CD14-positive monocyte (primary cell): ENCODE measurements at regions of chr16 and their contacts with region 1.

Region 1: GRCh38 chr16:3023669-3024478 is at the starts of genes HCFC1R1 and THOC6:
- DNase-seq: peak; percentile 95 to 96 (median 96)
- H3K4me3 ChIP-seq: peak within 1 kb of the TSS; percentile 44 to 91 (median 58)
- H3K4me3 Mint-ChIP-seq: peak within 1 kb of the TSS; percentile 88 to 96
- H3K27ac ChIP-seq: peak within 1 kb of the TSS; percentile 34 to 96
- H3K27ac Mint-ChIP-seq: peak within 1 kb of the TSS; percentile 87 to 99 (median 95)
- H3K4me1 ChIP-seq: peaks cover 61 to 68% of the 10 kb centered on the region in 2 donors
- H3K4me1 Mint-ChIP-seq: peaks cover 54% of the 10 kb centered on the region
- H3K27me3 ChIP-seq: peaks cover 3 to 9% of the 10 kb centered on the region in 2 donors
- H3K27me3 Mint-ChIP-seq: peaks cover 15 to 20% (median 16%) of the 10 kb centered on the region in 3 donors
- CTCF ChIP-seq: no peak
- polyA plus RNA-seq, gene HCFC1R1: 16.7 to 27.1 (median 19.9) TPM
- polyA plus RNA-seq, gene THOC6: 42.4 to 59.2 (median 57.7) TPM

Region 2: GRCh38 chr16:2777231-2777902 is 246.5 kb before region 1 on chr16 and contains the start of gene ELOB:
- intact Hi-C with region 1: loop called in 1 of 2 experiments (anchors 5 kb)
- DNase-seq: peak; percentile 67 to 79 (median 76)
- H3K4me3 ChIP-seq: peak within 1 kb of the TSS; percentile 94 to 98 (median 97)
- H3K4me3 Mint-ChIP-seq: peak within 1 kb of the TSS; percentile 91 to 97
- H3K27ac ChIP-seq: peak within 1 kb of the TSS; percentile 92 to 99
- H3K27ac Mint-ChIP-seq: peak within 1 kb of the TSS; percentile 93 to 98 (median 96)
- H3K4me1 ChIP-seq: peaks cover 32 to 37% of the 10 kb centered on the region in 2 donors
- H3K4me1 Mint-ChIP-seq: peaks cover 41% of the 10 kb centered on the region
- H3K27me3 ChIP-seq: no peaks in the 10 kb centered on the region
- H3K27me3 Mint-ChIP-seq: peaks cover 0 to 11% (median 5%) of the 10 kb centered on the region in 3 donors
- CTCF ChIP-seq: no peak
- polyA plus RNA-seq, gene ELOB: 150 to 405 (median 363) TPM

Region 3: DNA sequence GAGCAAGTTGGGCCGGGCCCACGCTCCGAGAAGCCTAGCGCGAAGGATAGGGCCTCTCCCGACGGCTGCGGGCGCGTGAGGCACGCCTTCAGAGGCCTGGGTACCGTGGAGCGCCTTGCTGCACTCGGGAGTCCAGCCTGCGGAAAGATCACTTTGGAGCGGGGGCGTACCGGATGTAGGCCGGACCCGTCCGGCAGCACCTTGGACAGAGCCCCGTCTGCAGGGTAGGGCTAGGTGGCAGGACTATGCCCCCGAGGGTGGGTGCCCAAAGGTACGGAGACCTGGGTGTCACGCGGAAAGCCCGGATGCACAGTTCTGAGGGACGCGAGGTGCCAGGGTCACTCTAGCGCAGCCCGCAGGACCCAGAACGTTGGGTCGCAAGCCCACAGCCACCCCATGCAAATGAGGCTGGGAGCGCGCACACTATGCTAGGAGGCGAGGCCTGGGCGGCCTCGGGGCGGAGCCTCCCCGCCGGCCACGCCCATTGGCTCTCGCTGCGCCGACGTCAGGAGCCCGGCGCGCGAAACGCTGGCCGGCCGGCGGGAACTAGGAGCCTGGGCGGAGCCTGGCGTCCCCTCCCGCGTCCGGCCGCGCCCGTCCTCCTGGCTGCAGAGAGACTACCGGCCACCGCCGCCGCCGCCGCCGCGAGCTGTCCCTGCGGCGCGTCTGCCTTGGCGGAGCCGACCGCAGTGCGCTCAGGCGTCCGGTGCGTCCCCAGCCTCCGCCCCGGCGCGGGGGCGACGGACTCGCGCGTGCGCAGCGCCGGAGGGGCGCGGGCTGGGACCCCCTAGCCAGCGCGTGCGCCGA is 54.9 kb before region 1 on chr16 and contains the start of gene PAQR4:
- intact Hi-C with region 1: loop called in 1 of 2 experiments (anchors 5 kb)
- DNase-seq: peak; percentile 87 to 92 (median 87)
- H3K4me3 ChIP-seq: peak within 1 kb of the TSS; percentile 63 to 95 (median 63)
- H3K4me3 Mint-ChIP-seq: peak within 1 kb of the TSS; percentile 77 to 85
- H3K27ac ChIP-seq: peak within 1 kb of the TSS; percentile 20 to 53
- H3K27ac Mint-ChIP-seq: peak within 1 kb of the TSS in 5 of 7 donors; percentile 24 to 83 (median 70)
- H3K4me1 ChIP-seq: peaks cover 50 to 66% of the 10 kb centered on the region in 2 donors
- H3K4me1 Mint-ChIP-seq: peaks cover 41% of the 10 kb centered on the region
- H3K27me3 ChIP-seq: peaks cover 17 to 44% of the 10 kb centered on the region in 2 donors
- H3K27me3 Mint-ChIP-seq: peaks cover 30 to 48% (median 34%) of the 10 kb centered on the region in 3 donors
- CTCF ChIP-seq: no peak
- polyA plus RNA-seq, gene PAQR4: 6.3 to 14.2 (median 8.9) TPM

Region 4: GRCh38 chr16:3003582-3004302 is 20.1 kb before region 1 on chr16:
- intact Hi-C with region 1: loop called (anchors 2 kb)
- DNase-seq: peak; percentile 98 to 99 (median 98)
- H3K4me3 ChIP-seq: no peak overlapping the region
- H3K4me3 Mint-ChIP-seq: peak overlapping the region; percentile 42 to 64
- H3K27ac ChIP-seq: no peak overlapping the region
- H3K27ac Mint-ChIP-seq: no peak overlapping the region
- H3K4me1 ChIP-seq: peaks cover 40 to 41% of the 10 kb centered on the region in 2 donors
- H3K4me1 Mint-ChIP-seq: peaks cover 38% of the 10 kb centered on the region
- H3K27me3 ChIP-seq: peaks cover 0 to 2% of the 10 kb centered on the region in 2 donors
- H3K27me3 Mint-ChIP-seq: peaks cover 0 to 21% (median 17%) of the 10 kb centered on the region in 3 donors
- CTCF ChIP-seq: peak; percentile 34

Region 5: GRCh38 chr16:3065069-3065741 is 41.3 kb after region 1 on chr16 and contains the start of gene IL32:
- intact Hi-C with region 1: no loop called
- DNase-seq: peak in 1 of 3 donors; percentile 55
- H3K4me3 ChIP-seq: no peak within 1 kb of the TSS
- H3K4me3 Mint-ChIP-seq: peak within 1 kb of the TSS in 1 of 2 donors; percentile 66
- H3K27ac ChIP-seq: no peak within 1 kb of the TSS
- H3K27ac Mint-ChIP-seq: peak within 1 kb of the TSS in 2 of 7 donors; percentile 32 to 33
- H3K4me1 ChIP-seq: peaks cover 22 to 26% of the 10 kb centered on the region in 2 donors
- H3K4me1 Mint-ChIP-seq: peaks cover 27% of the 10 kb centered on the region
- H3K27me3 ChIP-seq: no peaks in the 10 kb centered on the region
- H3K27me3 Mint-ChIP-seq: peaks cover 0 to 9% (median 2%) of the 10 kb centered on the region in 3 donors
- CTCF ChIP-seq: no peak
- polyA plus RNA-seq, gene IL32: 0.53 to 8.0 (median 5.6) TPM

Region 6: GRCh38 chr16:3123986-3124886 is 100.4 kb after region 1 on chr16:
- intact Hi-C with region 1: loop called in 1 of 2 experiments (anchors 10 kb)
- DNase-seq: peak; percentile 88 to 95 (median 90)
- H3K4me3 ChIP-seq: peak overlapping the region; percentile 52 to 99 (median 95)
- H3K4me3 Mint-ChIP-seq: peak overlapping the region; percentile 94 to 97
- H3K27ac ChIP-seq: peak overlapping the region; percentile 68 to 69
- H3K27ac Mint-ChIP-seq: peak overlapping the region; percentile 88 to 98 (median 97)
- H3K4me1 ChIP-seq: peaks cover 20 to 29% of the 10 kb centered on the region in 2 donors
- H3K4me1 Mint-ChIP-seq: peaks cover 23% of the 10 kb centered on the region
- H3K27me3 ChIP-seq: no peaks in the 10 kb centered on the region
- H3K27me3 Mint-ChIP-seq: peaks cover 4 to 8% (median 6%) of the 10 kb centered on the region in 3 donors
- CTCF ChIP-seq: no peak

Region 7: DNA sequence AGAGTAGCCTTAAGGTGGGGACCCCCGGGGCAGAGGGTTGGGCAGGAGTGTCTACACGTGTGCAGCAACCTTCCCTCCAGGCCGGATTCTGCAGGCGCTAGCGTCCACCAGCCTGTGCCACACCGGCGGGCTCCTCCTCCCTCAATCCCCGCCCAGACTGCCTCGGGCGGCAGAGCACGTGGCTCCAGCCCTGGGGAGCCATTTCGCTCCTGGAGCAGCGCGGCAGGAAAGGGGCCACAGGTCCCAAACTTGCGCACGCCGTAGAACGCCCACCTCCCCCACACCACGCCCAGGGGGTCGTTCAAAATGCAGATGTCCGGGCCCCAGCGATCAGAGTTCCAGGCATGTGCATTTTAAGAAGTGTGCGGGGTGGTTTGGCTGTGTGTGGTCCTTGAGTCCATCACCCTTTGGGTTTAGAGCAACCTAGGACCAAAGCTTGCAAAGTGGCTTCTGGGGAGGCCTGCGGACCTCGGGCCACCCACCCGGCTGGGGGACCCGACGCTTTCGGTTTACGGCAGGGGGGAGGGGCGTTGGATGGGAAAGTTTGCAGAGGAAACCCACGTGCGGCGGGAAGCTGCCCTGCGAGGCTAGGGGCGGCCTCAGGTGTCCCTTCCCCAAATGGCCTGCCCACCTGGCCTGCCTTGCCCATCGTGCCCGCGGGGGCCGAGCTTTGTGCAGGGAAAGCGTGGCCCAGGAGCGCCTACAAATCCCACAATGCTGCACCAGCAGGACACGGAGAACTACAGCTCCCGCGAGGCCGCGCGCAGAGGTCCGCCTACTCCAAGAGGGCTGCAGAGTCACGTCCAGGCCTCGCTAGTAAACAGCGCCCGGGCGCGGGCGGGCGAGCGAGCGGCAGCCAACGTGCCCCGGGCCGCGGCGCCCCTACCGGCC is 1247.5 kb after region 1 on chr16:
- intact Hi-C with region 1: loop called in 1 of 2 experiments (anchors 5 kb)
- DNase-seq: peak; percentile 77 to 80 (median 77)
- H3K4me3 ChIP-seq: peak overlapping the region; percentile 64 to 100 (median 97)
- H3K4me3 Mint-ChIP-seq: peak overlapping the region; percentile 88 to 91
- H3K27ac ChIP-seq: peak overlapping the region; percentile 56 to 79
- H3K27ac Mint-ChIP-seq: peak overlapping the region; percentile 69 to 94 (median 88)
- H3K4me1 ChIP-seq: peaks cover 19 to 38% of the 10 kb centered on the region in 2 donors
- H3K4me1 Mint-ChIP-seq: peaks cover 19% of the 10 kb centered on the region
- H3K27me3 ChIP-seq: no peaks in the 10 kb centered on the region
- H3K27me3 Mint-ChIP-seq: no peaks in the 10 kb centered on the region
- CTCF ChIP-seq: no peak